Gastrocnemius medialis (tissue), 4 donors: ENCODE measurements at regions of chr16 and their contacts with region 1.

Region 1: DNA sequence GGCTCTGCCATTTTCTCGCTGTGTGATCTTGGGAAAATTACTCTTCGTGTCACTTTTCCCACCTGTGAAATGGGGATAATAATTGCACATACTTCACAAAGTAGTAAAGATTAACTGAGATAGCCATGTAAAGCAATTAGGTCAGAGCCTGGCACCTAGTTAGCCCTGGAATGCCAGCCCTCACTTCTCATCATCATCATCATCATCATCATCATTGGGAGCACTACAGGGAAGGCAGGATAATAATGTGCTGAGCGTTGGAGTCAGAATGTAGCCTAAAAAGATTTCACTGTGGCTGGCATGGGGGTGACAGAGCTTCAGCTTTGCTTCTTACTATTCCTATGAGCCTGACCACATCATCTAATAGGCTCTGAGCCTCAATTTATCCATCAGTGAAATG is 362.6 kb downstream of the TOX3 start:
- DNase-seq: no peak
- ATAC-seq: no peak
- H3K4me3 ChIP-seq: no peak overlapping the region
- H3K27ac ChIP-seq: no peak overlapping the region
- H3K4me1 ChIP-seq: no peaks in the 10 kb centered on the region
- H3K27me3 ChIP-seq: no peaks in the 10 kb centered on the region
- CTCF ChIP-seq: no peak
- POLR2A ChIP-seq: no peak

Region 2: GRCh38 chr16:52283018-52283417 is 98.7 kb after region 1 on chr16:
- in situ Hi-C with region 1: no loop called
- intact Hi-C with region 1: no loop called
- DNase-seq: no peak
- ATAC-seq: no peak
- H3K4me3 ChIP-seq: no peak overlapping the region
- H3K27ac ChIP-seq: no peak overlapping the region
- H3K4me1 ChIP-seq: no peaks in the 10 kb centered on the region
- H3K27me3 ChIP-seq: no peaks in the 10 kb centered on the region
- CTCF ChIP-seq: no peak
- POLR2A ChIP-seq: no peak

Region 3: DNA sequence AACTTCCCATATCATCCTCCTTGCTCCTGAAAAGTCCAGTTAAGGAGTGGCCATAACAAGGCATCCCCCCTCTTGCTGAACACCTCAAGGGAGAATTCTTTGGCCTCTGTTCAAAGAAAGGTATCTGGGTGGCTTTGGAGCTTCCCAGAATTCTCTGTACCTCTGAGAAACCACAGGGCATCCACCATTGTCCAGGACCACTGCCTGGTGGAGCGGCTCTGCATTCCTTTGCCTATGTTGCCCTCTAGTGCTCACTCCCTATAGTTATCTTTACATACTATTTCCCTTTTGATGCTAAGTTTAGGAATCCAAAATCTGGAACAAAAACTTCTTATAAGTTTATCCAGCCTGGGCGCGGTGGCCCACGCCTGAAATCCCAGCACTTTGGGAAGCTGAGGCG is 838.0 kb after region 1 on chr16:
- in situ Hi-C with region 1: loop called in 1 of 4 experiments (anchors 10 kb)
- intact Hi-C with region 1: no loop called
- DNase-seq: no peak
- ATAC-seq: no peak
- H3K4me3 ChIP-seq: no peak overlapping the region
- H3K27ac ChIP-seq: no peak overlapping the region
- H3K4me1 ChIP-seq: no peaks in the 10 kb centered on the region
- H3K27me3 ChIP-seq: no peaks in the 10 kb centered on the region
- CTCF ChIP-seq: peak in 2 of 5 experiments; percentile 11 to 30
- POLR2A ChIP-seq: no peak